MCF 10A (cell line): ENCODE measurements at regions of chr16 and their contacts with region 1.

Region 1: DNA sequence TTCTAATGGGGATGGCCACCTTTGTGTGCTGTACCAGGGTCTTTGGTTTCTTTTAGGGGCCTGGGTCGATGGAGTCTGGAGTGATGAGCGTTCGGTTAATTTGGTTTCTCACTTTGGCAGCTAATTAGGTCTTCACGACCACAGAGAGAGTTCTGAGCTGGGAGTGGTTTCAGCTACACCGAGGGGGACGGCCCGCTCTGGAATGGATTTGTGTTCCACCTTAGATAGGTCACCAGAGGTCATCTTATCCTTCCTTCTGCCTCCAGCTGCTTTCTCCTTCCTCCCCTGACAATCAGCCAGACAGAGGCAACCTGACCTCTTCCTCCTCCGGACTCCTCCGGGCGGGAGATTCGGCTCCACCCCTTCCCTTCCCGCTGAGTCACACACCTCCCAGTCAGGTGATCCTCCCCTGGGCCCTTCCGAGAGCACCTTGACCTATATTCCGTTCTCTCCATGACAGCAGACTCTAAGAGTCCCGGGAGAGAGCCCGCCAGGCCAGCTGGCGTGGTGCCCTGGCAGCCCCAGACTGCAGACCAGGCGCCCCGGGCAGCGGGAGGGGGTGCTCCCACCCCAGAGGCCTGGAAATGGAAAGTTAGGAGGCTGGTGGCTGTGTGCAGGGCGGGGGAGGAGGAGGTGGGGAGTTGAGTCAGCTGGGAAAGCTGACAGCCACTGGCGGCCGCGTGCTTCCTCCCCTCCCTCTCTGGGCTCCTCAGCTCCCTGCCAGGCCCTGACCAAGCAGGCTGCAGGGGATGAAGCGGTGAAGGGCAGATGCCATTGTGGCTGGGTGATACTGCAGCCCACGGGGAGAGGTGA is 44.7 kb downstream of the CHD9 start:
- DNase-seq: peak; percentile 97
- H3K4me3 Mint-ChIP-seq: peak overlapping the region; percentile 68
- H3K27ac Mint-ChIP-seq: peak overlapping the region; percentile 96
- H3K4me1 Mint-ChIP-seq: peaks cover 30% of the 10 kb centered on the region
- H3K27me3 Mint-ChIP-seq: no peaks in the 10 kb centered on the region
- CTCF ChIP-seq: no peak

Region 2: DNA sequence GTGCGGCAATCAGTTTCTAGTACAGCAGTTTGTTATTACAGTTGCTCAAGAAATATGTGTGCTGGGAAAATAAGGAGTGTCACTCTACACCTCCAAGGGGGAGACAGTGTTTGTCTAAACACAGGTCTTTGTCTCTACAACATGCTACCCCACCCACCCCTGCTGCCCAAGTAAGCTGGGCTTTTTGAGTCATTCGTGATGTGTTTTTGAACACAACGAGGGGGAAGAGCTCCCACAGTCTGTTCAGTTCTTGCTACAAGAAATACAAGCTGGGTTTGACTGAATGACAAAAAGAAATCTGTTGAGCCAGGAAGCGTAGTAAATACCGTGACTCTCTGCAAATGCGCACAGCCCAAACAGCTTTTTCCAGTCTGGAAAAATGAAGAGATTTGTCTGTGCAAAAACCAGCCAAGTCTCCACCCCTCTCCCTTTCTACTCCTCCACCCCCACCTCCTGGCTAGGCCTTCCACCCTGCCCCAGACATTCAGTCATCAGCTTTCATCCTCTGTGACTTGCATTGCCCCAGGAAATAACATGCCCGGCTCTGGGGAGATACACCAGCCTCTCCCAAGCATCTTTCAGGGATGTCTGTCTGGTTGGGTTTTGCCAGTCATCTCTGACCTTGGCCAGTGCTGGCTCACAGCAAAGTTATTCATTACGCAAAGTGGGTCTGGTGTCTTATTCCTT is 19.0 kb before region 1 on chr16:
- CTCF ChIA-PET with region 1: interaction called, 26 read pairs
- POLR2A ChIA-PET with region 1: interaction called, 100 read pairs
- intact Hi-C with region 1: loop called (anchors 2 kb)
- DNase-seq: peak; percentile 87
- H3K4me3 Mint-ChIP-seq: peak overlapping the region; percentile 64
- H3K27ac Mint-ChIP-seq: peak overlapping the region; percentile 84
- H3K4me1 Mint-ChIP-seq: peaks cover 63% of the 10 kb centered on the region
- H3K27me3 Mint-ChIP-seq: no peaks in the 10 kb centered on the region
- CTCF ChIP-seq: no peak

Region 3: GRCh38 chr16:53130159-53131049 is 30.9 kb after region 1 on chr16:
- CTCF ChIA-PET with region 1: interaction called, 6 read pairs
- POLR2A ChIA-PET with region 1: interaction called, 19 read pairs
- intact Hi-C with region 1: loop called (anchors 2 kb)
- DNase-seq: peak; percentile 93
- H3K4me3 Mint-ChIP-seq: peak overlapping the region; percentile 94
- H3K27ac Mint-ChIP-seq: peak overlapping the region; percentile 89
- H3K4me1 Mint-ChIP-seq: peaks cover 23% of the 10 kb centered on the region
- H3K27me3 Mint-ChIP-seq: no peaks in the 10 kb centered on the region
- CTCF ChIP-seq: peak; percentile 61

Region 4: GRCh38 chr16:53147500-53148065 is 48.1 kb after region 1 on chr16:
- CTCF ChIA-PET with region 1: no interaction called
- POLR2A ChIA-PET with region 1: no interaction called
- intact Hi-C with region 1: no loop called
- DNase-seq: peak; percentile 8
- H3K4me3 Mint-ChIP-seq: no peak overlapping the region
- H3K27ac Mint-ChIP-seq: peak overlapping the region; percentile 56
- H3K4me1 Mint-ChIP-seq: peaks cover 12% of the 10 kb centered on the region
- H3K27me3 Mint-ChIP-seq: no peaks in the 10 kb centered on the region
- CTCF ChIP-seq: no peak